ENCODE measurements at regions of chr2 and their contacts with region 1.

Region 1: GRCh38 chr2:109486711-109487535 is 126.8 kb downstream of the SEPTIN10 start:
- DNase-seq: no peak
- ATAC-seq: no peak
- H3K4me3 ChIP-seq: no peak overlapping the region
- H3K27ac ChIP-seq: no peak overlapping the region
- H3K4me1 ChIP-seq: peaks cover 15 to 22% (median 20%) of the 10 kb centered on the region in 9 donors
- H3K27me3 ChIP-seq: no peaks in the 10 kb centered on the region
- CTCF ChIP-seq: no peak

Region 2: GRCh38 chr2:109098251-109098920 is 388.5 kb before region 1 on chr2:
- intact Hi-C with region 1: no loop called
- DNase-seq: no peak
- ATAC-seq: peak in 1 of 8 donors; percentile 46
- H3K4me3 ChIP-seq: no peak overlapping the region
- H3K27ac ChIP-seq: no peak overlapping the region
- H3K4me1 ChIP-seq: peaks cover 0 to 10% (median 0%) of the 10 kb centered on the region in 9 donors
- H3K27me3 ChIP-seq: peaks cover 0 to 33% (median 6%) of the 10 kb centered on the region in 7 donors
- CTCF ChIP-seq: no peak

Region 3: DNA sequence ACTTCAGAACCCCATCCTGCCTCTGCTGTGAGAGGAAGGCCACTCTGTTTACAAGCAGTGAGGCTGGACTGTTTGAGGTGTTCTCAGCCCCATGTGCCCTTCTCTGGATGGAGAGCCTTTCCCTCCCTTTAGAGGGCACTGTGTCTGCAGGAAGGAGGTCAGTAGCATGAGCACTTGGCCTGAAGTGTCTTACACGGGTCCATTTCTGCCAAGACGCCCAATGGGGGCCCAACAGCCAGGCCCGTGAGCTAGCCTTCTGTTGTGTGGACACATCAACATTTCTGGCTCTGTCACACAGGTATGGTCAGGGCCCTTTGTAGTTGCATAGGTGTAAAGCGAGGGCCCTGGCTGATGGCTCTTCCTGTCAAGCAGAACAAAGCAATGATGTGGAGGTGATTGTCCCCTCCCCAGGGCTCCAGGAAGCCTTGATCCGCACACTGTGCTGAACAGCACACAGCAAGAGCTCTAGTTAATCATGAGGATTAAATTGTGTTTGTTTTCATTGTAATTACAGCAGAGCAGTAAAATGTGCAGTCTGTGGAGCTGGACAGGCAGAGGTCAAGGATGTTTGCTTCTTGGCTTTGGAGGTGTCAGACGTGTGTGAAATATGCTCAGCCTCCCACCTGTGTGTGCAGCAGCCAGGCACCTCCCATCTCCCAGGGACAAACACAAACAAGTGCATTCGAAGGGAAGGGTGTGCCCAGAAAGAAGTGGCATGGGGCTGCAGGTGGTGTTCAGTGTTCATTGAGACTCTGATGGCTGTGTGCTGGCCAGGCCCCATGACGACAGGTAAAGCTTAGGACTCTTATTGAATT is 225.8 kb before region 1 on chr2:
- intact Hi-C with region 1: loop called in 1 of 10 experiments (anchors 10 kb)
- DNase-seq: no peak
- ATAC-seq: peak in 1 of 8 donors; percentile 26
- H3K4me3 ChIP-seq: no peak overlapping the region
- H3K27ac ChIP-seq: no peak overlapping the region
- H3K4me1 ChIP-seq: peaks cover 13 to 72% (median 36%) of the 10 kb centered on the region in 9 donors
- H3K27me3 ChIP-seq: no peaks in the 10 kb centered on the region
- CTCF ChIP-seq: peak in 6 of 9 donors; percentile 9 to 45 (median 26)

Region 4: GRCh38 chr2:109429233-109430095 is 57.5 kb before region 1 on chr2:
- intact Hi-C with region 1: no loop called
- DNase-seq: no peak
- ATAC-seq: peak in 1 of 8 donors; percentile 8
- H3K4me3 ChIP-seq: no peak overlapping the region
- H3K27ac ChIP-seq: no peak overlapping the region
- H3K4me1 ChIP-seq: no peaks in the 10 kb centered on the region
- H3K27me3 ChIP-seq: no peaks in the 10 kb centered on the region
- CTCF ChIP-seq: no peak

Measured in heart right ventricle (tissue), 16 donors.